AG04449 (cell line): ENCODE measurements at regions of chr22 and their contacts with region 1.

Region 1: GRCh38 chr22:38262051-38262795 is 10.6 kb downstream of the TMEM184B start:
- DNase-seq: no peak
- H3K4me3 ChIP-seq: no peak overlapping the region
- CTCF ChIP-seq: peak; percentile 25

Region 2: GRCh38 chr22:37818409-37819099 is 443.7 kb before region 1 on chr22:
- CTCF ChIA-PET with region 1: no interaction called
- POLR2A ChIA-PET with region 1: no interaction called
- DNase-seq: no peak
- H3K4me3 ChIP-seq: peak overlapping the region; percentile 18
- CTCF ChIP-seq: peak; percentile 59

Region 3: DNA sequence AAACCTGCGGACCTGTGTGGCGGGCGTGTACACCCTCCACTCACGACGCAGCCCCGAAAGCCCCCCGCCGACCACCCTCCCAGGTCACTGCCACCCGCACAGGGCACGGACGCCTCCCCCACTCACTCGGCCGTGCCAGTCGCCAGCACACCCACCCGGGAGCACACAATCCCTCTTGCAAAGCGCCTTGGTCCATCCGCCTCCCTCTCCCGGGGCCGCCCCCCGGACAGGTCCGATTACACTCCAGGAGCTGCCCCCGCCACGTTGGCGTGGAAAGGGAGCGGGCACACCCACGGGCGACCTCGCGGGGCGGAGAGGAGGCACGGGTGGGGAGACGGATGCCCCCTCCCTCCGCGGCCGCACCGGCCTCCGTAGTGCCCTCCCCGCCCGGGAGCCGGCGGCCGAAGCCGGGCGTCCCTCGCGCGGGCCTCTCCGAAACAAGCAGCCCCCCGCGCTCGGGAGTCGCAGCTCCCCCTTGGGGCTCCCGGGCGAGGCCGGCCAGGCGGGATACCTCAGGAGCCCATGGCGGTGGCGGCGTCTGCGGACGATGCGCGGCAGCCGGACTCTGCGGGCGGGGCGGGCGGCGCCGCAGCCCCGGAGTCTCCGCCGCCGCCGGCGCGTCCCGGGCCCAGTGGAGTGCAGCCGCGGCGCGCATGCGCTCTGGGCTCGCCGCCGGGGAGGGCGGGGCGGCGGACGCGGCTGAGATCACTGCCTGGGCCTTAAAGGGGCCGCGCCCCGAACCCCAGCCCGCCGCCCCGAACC is 10.3 kb after region 1 on chr22 and contains the start of gene TMEM184B:
- CTCF ChIA-PET with region 1: interaction called, 17 read pairs
- POLR2A ChIA-PET with region 1: no interaction called
- DNase-seq: no peak
- H3K4me3 ChIP-seq: peak within 1 kb of the TSS; percentile 85
- CTCF ChIP-seq: no peak

Region 4: GRCh38 chr22:38422611-38423511 is 160.6 kb after region 1 on chr22:
- CTCF ChIA-PET with region 1: no interaction called
- POLR2A ChIA-PET with region 1: no interaction called
- DNase-seq: no peak
- H3K4me3 ChIP-seq: no peak overlapping the region
- CTCF ChIP-seq: no peak